Activated T-helper 1 cell treated with anti-CD3 and anti-CD28 coated beads, Interleukin-12 subunit alpha, Interleukin-12 subunit beta, Interleukin-2, Interleukin-4 antibody, amounts not matched to agents 30 ng/mL and 10 ng/mL and 1 ng/mL, durations not matched to agents 14 hours and 24 hours and 36 hours (primary cell): ENCODE measurements at regions of chr6 and their contacts with region 1.

Region 1: DNA sequence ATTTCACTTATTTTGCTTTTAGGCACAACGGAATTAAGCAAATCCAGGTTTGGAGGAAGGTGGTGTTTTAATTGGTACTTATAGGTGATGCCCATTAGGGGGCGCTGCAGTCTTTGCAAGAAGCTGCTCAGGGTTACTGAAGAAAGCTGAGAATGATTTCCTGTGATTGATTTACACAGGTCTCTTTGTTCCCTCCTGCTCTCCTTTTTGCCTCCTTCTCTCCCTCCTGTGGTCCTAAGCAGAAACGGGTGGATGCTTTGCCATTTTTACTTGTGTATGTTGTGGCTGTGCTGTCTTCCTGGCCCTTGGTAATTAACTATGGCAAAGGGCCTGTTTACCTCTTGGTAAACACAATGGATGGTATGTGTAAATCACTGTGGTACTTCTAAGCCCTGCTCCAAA is 97.8 kb downstream of the ANKS1A start:
- DNase-seq: peak; percentile 37
- H3K4me3 Mint-ChIP-seq: no peak overlapping the region
- H3K27ac Mint-ChIP-seq: no peak overlapping the region
- H3K4me1 Mint-ChIP-seq: no peaks in the 10 kb centered on the region
- H3K27me3 Mint-ChIP-seq: no peaks in the 10 kb centered on the region

Region 2: DNA sequence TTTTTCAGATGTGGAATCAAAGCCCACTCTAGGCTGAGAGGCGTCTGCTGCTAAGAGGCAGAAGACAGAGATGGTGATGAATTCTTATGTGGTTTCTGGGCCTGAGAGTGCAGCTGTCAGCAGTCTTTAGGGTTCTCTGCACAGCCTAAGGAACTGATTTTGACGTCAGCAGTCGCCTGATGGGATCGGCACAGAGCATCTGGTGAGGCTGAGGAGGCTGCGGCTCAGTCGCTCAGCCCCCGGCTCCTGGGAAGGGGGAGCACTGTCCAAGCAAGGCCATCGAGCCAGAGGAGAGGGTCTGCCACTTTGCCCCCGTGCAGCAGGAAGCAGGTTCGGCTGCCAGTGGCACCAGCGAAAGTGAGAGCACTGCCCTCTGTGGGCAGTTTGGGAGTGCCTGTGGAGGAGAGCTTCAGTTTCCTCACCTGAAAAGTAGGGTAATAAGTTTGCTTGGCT is 61.8 kb after region 1 on chr6:
- intact Hi-C with region 1: loop called (anchors 2 kb)
- DNase-seq: peak; percentile 4
- H3K4me3 Mint-ChIP-seq: no peak overlapping the region
- H3K27ac Mint-ChIP-seq: no peak overlapping the region
- H3K4me1 Mint-ChIP-seq: peaks cover 16% of the 10 kb centered on the region
- H3K27me3 Mint-ChIP-seq: no peaks in the 10 kb centered on the region

Region 3: GRCh38 chr6:35096129-35096862 is 109.5 kb after region 1 on chr6:
- intact Hi-C with region 1: no loop called
- DNase-seq: no peak
- H3K4me3 Mint-ChIP-seq: no peak overlapping the region
- H3K27ac Mint-ChIP-seq: no peak overlapping the region
- H3K4me1 Mint-ChIP-seq: no peaks in the 10 kb centered on the region
- H3K27me3 Mint-ChIP-seq: peaks cover 27% of the 10 kb centered on the region

Region 4: DNA sequence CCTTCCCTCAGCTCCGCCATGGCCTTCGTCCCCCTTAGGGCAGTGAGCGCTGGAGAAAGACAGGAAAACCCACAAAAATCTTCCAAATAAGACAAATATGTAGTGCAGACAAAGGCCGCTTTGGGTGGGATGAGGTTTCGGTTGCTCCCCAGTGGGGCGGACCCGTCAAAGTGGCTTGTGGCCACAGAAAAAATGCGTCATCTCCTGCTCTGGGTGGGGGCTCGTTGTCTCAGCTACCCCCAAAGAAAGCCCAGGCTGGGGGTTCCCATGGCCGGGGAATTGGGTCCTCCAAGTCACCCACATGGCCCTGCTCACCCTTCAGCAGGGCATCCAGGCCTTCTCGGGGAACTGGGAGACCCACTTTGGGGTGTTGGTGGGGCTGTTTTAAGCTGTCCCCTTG is 205.0 kb after region 1 on chr6:
- intact Hi-C with region 1: no loop called
- DNase-seq: no peak
- H3K4me3 Mint-ChIP-seq: no peak overlapping the region
- H3K27ac Mint-ChIP-seq: no peak overlapping the region
- H3K4me1 Mint-ChIP-seq: no peaks in the 10 kb centered on the region
- H3K27me3 Mint-ChIP-seq: peaks cover 13% of the 10 kb centered on the region

Region 5: DNA sequence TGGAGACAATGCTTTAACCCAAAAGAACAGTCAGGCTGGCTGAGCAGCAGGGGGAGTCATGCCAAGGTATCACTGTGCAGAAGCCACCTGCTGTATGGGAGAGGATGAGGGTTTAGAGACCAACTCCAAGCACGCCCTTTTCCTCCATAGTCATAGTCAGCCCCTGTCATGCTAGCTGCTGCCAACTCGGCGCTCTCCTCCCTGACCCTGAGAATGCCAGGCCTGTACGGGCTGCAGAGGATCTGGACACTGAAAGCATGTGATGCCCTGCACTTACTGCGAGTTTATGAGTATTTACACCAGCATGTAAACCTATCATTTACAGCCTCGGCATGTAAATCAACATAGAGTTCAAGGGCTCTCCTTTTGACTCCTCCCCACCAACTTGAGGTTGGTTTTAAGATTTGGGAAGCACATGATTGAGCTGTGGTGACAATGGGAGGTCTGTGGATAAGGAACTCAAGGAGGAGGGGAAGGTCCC is 215.3 kb after region 1 on chr6:
- intact Hi-C with region 1: loop called (anchors 1 kb)
- DNase-seq: no peak
- H3K4me3 Mint-ChIP-seq: no peak overlapping the region
- H3K27ac Mint-ChIP-seq: no peak overlapping the region
- H3K4me1 Mint-ChIP-seq: no peaks in the 10 kb centered on the region
- H3K27me3 Mint-ChIP-seq: peaks cover 33% of the 10 kb centered on the region